ENCODE measurements at regions of chr1 and their contacts with region 1.

Region 1: DNA sequence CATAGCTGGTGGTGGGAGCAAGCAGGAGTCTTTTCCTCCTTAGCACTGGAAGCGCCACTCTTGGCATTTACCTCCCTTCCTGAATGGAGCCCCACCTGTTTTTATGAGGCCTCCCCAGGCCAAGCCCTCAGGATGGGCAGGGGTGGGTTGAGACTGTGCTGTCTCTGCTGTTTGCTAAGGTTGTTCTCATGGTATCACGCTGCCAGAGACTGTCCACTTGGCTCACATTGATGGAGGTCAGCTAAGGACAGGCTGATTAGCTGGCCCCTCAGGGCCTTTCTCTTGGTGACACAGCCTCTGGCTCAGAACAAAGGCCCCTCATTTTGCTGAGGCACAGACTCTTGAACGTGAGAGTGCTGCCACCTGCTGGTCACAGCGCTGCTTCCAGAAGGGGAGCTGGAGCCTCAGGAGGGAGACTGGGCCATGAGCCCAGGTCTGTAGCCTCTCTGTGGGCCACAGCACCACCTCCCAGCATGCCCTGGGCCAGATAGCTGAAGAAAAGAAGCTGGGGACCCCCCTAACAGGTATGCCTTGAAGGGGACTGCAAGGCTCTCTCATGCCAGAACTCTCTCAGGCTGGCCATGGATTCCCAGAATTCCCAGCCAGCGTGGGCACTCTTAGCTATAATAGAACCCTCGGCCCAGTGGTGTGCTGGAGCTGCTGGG is 85.6 kb downstream of the CD58 start:
- DNase-seq: peak; percentile 73
- ATAC-seq: peak; percentile 88
- H3K4me3 ChIP-seq: no peak overlapping the region
- H3K27ac ChIP-seq: peak overlapping the region; percentile 23; the same call in 1 of the 2 replicates
- H3K4me1 ChIP-seq: peaks cover 34 to 54% of the 10 kb centered on the region in 2 experiments
- H3K27me3 ChIP-seq: no peaks in the 10 kb centered on the region
- CTCF ChIP-seq: peak; percentile 86 to 97 (median 96)
- POLR2A ChIP-seq: no peak
- RAD21 ChIP-seq: peak; percentile 95

Region 2: DNA sequence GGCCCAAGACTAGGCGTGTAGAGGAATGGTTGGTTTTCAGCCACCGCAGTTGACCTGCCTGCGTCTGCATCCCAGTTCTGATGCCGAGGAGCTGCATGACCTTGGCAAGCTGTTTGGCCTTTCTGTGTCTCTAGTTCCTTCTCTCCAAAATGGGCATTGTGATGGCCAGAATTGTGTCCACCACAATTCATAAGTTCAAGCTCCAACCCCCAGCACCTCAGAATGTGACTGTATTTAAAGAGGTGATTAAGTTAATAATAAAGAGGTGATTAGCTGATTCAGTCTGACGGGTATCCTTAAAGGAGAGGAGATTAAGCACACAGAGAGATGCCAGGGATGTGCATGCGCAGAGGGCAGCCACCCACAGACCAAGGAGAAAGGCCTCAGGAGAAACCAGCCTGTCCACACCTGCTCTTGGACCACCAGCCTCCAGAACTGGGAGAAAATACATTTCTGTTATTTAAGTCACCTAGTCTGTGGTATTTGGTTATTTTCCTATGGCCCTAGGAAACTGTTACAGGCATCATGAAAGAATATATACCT is 345.5 kb before region 1 on chr1:
- CTCF ChIA-PET with region 1: interaction called, 288 read pairs
- POLR2A ChIA-PET with region 1: interaction called, 36 read pairs
- RAD21 ChIA-PET with region 1: interaction called, 44 to 47 read pairs
- intact Hi-C with region 1: loop called (anchors 1 kb)
- DNase-seq: no peak
- ATAC-seq: no peak
- H3K4me3 ChIP-seq: no peak overlapping the region
- H3K27ac ChIP-seq: no peak overlapping the region
- H3K4me1 ChIP-seq: peaks cover 2 to 8% of the 10 kb centered on the region in 2 experiments; a peak in 2 of 4 replicates
- H3K27me3 ChIP-seq: no peaks in the 10 kb centered on the region
- CTCF ChIP-seq: no peak
- POLR2A ChIP-seq: no peak
- RAD21 ChIP-seq: no peak

Region 3: DNA sequence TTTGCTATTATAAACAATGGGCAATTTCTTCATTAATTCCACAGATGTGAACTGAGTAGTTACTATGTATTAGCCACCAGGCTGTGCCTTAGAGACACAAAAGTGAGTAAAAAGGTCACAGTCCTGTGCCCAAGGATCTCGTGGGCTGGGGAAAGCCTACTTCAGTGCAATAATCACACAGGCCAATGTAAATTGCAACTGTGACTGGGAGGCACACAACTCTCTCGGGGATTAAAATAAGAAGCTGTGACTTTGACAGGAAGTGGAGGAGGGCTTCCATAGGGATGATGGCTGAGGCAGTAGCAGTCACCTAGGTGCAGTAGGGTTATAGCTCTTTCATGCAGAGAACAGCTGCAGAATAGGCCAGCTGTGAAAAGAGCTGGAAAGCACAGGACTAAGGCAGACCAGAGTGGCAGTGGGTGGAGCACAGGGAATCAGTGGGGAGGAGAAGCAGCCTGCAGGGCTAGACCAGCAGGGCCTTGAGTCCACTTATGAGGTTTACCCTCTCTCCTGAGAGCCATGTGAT is 252.2 kb before region 1 on chr1:
- CTCF ChIA-PET with region 1: interaction called, 8 read pairs
- POLR2A ChIA-PET with region 1: no interaction called
- RAD21 ChIA-PET with region 1: no interaction called
- intact Hi-C with region 1: loop called (anchors 2 kb)
- DNase-seq: no peak
- ATAC-seq: no peak
- H3K4me3 ChIP-seq: no peak overlapping the region
- H3K27ac ChIP-seq: no peak overlapping the region
- H3K4me1 ChIP-seq: no peaks in the 10 kb centered on the region
- H3K27me3 ChIP-seq: no peaks in the 10 kb centered on the region; the same call in 1 of the 2 replicates
- CTCF ChIP-seq: no peak
- POLR2A ChIP-seq: no peak
- RAD21 ChIP-seq: peak; percentile 35; the same call in 1 of the 2 replicates

Region 4: GRCh38 chr1:116465845-116466685 is 19.1 kb before region 1 on chr1:
- CTCF ChIA-PET with region 1: interaction called, 10 read pairs
- POLR2A ChIA-PET with region 1: no interaction called
- RAD21 ChIA-PET with region 1: no interaction called
- intact Hi-C with region 1: no loop called
- DNase-seq: no peak
- ATAC-seq: no peak
- H3K4me3 ChIP-seq: no peak overlapping the region
- H3K27ac ChIP-seq: no peak overlapping the region
- H3K4me1 ChIP-seq: no peaks in the 10 kb centered on the region
- H3K27me3 ChIP-seq: no peaks in the 10 kb centered on the region
- CTCF ChIP-seq: no peak
- POLR2A ChIP-seq: no peak
- RAD21 ChIP-seq: no peak

Region 5: GRCh38 chr1:116504308-116505156 is 19.3 kb after region 1 on chr1:
- CTCF ChIA-PET with region 1: interaction called, 84 read pairs
- POLR2A ChIA-PET with region 1: interaction called, 4 read pairs
- RAD21 ChIA-PET with region 1: interaction called, 13 to 15 read pairs
- intact Hi-C with region 1: no loop called
- DNase-seq: no peak
- ATAC-seq: peak; percentile 35
- H3K4me3 ChIP-seq: no peak overlapping the region
- H3K27ac ChIP-seq: peak overlapping the region; percentile 28
- H3K4me1 ChIP-seq: peaks cover 51 to 59% of the 10 kb centered on the region in 2 experiments
- H3K27me3 ChIP-seq: no peaks in the 10 kb centered on the region
- CTCF ChIP-seq: no peak
- POLR2A ChIP-seq: no peak
- RAD21 ChIP-seq: no peak

Region 6: GRCh38 chr1:116902032-116902738 is 417.0 kb after region 1 on chr1:
- CTCF ChIA-PET with region 1: no interaction called
- POLR2A ChIA-PET with region 1: no interaction called
- RAD21 ChIA-PET with region 1: no interaction called
- intact Hi-C with region 1: no loop called
- DNase-seq: no peak
- ATAC-seq: no peak
- H3K4me3 ChIP-seq: no peak overlapping the region
- H3K27ac ChIP-seq: no peak overlapping the region
- H3K4me1 ChIP-seq: no peaks in the 10 kb centered on the region
- H3K27me3 ChIP-seq: no peaks in the 10 kb centered on the region; the same call in 1 of the 2 replicates
- CTCF ChIP-seq: no peak
- POLR2A ChIP-seq: no peak
- RAD21 ChIP-seq: no peak